Activated naive CD4-positive, alpha-beta T cell treated with anti-CD3 and anti-CD28 coated beads for 36 hours (primary cell): ENCODE measurements at regions of chr2 and their contacts with region 1.

Region 1: GRCh38 chr2:74587664-74588277 is 33.3 kb downstream of the DOK1 start:
- DNase-seq: peak; percentile 79
- H3K4me3 Mint-ChIP-seq: no peak overlapping the region
- H3K27ac Mint-ChIP-seq: no peak overlapping the region
- H3K4me1 Mint-ChIP-seq: peaks cover 28% of the 10 kb centered on the region
- H3K27me3 Mint-ChIP-seq: peaks cover 9% of the 10 kb centered on the region

Region 2: DNA sequence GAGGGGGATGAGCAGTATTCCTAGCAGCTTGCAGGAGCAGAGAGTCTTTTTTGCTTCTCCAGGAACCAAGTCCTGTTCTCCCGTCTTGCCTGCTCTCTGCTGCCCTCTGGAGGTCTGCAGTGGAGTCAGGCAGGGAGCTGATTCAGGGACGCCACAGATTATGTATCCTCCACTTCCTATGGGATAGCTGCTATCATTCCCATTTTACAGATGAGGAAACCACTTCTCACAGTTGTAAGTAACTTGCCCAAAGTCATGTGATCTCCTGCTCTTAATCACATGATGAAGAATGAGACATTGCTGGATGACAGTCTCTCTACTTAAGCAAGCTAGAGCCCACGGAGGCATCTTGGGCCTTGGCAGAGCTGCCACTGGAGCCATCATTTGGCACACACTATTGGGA is 252.8 kb before region 1 on chr2:
- CTCF ChIA-PET with region 1: interaction called, 4 read pairs
- intact Hi-C with region 1: loop called (anchors 5 kb)
- DNase-seq: peak; percentile 86
- H3K4me3 Mint-ChIP-seq: no peak overlapping the region
- H3K27ac Mint-ChIP-seq: no peak overlapping the region
- H3K4me1 Mint-ChIP-seq: no peaks in the 10 kb centered on the region
- H3K27me3 Mint-ChIP-seq: no peaks in the 10 kb centered on the region

Region 3: GRCh38 chr2:74491648-74492544 is 95.9 kb before region 1 on chr2:
- CTCF ChIA-PET with region 1: interaction called, 21 read pairs
- intact Hi-C with region 1: no loop called
- DNase-seq: no peak
- H3K4me3 Mint-ChIP-seq: no peak overlapping the region
- H3K27ac Mint-ChIP-seq: no peak overlapping the region
- H3K4me1 Mint-ChIP-seq: no peaks in the 10 kb centered on the region
- H3K27me3 Mint-ChIP-seq: no peaks in the 10 kb centered on the region

Region 4: GRCh38 chr2:74529357-74530238 is 58.2 kb before region 1 on chr2 and contains the starts of genes AUP1 and HTRA2:
- CTCF ChIA-PET with region 1: interaction called, 50 read pairs
- intact Hi-C with region 1: loop called (anchors 1 kb)
- DNase-seq: peak; percentile 96
- H3K4me3 Mint-ChIP-seq: peak within 1 kb of the TSS; percentile 98
- H3K27ac Mint-ChIP-seq: peak within 1 kb of the TSS; percentile 91
- H3K4me1 Mint-ChIP-seq: peaks cover 40% of the 10 kb centered on the region
- H3K27me3 Mint-ChIP-seq: no peaks in the 10 kb centered on the region
- total RNA-seq, gene AUP1: 77.4 to 78.5 TPM
- total RNA-seq, gene HTRA2: 39.0 to 39.7 TPM

Region 5: GRCh38 chr2:74553892-74554645 is 33.7 kb before region 1 on chr2 and contains the start of gene LOXL3:
- CTCF ChIA-PET with region 1: interaction called, 8 read pairs
- intact Hi-C with region 1: loop called (anchors 1 kb)
- DNase-seq: peak; percentile 82
- H3K4me3 Mint-ChIP-seq: peak within 1 kb of the TSS; percentile 94
- H3K27ac Mint-ChIP-seq: peak within 1 kb of the TSS; percentile 88
- H3K4me1 Mint-ChIP-seq: peaks cover 4% of the 10 kb centered on the region
- H3K27me3 Mint-ChIP-seq: peaks cover 17% of the 10 kb centered on the region
- total RNA-seq, gene LOXL3: 0.35 to 0.41 TPM

Region 6: GRCh38 chr2:74602586-74603281 is 15.0 kb after region 1 on chr2:
- CTCF ChIA-PET with region 1: interaction called, 10 read pairs
- intact Hi-C with region 1: no loop called
- DNase-seq: no peak
- H3K4me3 Mint-ChIP-seq: no peak overlapping the region
- H3K27ac Mint-ChIP-seq: no peak overlapping the region
- H3K4me1 Mint-ChIP-seq: no peaks in the 10 kb centered on the region
- H3K27me3 Mint-ChIP-seq: peaks cover 18% of the 10 kb centered on the region

Region 7: DNA sequence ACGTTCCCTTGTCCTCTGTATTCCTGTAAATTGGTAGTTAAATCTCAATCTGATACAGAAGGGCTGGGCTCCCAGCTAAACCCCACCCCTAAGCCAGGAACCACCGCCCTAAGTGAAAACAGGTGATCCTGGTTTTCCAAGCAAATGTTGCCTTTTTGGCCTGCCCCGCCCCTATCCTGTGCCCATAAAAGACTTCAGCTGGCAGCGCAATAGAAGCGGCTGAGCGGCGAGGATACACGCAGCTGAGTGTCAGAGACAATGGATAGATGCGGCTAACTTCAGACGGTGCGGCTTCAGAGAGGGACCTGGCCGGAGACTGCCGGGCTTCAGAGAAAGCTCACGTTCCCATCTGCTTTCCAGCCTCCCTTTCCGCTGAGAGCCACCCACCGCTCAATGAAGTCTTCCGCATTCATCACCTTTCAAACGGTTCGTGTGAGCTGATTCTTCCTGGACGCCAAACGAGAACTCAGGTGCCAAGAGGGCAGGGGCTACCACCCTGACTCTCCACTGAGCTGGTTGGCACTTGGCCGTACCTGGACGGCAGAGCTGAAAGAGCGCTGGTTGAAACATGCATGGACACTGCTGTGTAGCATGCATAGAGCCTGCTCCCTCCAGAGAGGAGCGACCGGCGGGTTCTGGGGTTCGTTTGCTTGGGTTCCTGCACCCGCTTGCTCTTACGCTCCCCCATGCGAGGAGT is 321.1 kb after region 1 on chr2:
- CTCF ChIA-PET with region 1: no interaction called
- intact Hi-C with region 1: no loop called
- DNase-seq: no peak
- H3K4me3 Mint-ChIP-seq: no peak overlapping the region
- H3K27ac Mint-ChIP-seq: no peak overlapping the region
- H3K4me1 Mint-ChIP-seq: peaks cover 7% of the 10 kb centered on the region
- H3K27me3 Mint-ChIP-seq: peaks cover 35% of the 10 kb centered on the region